CD4-positive, alpha-beta memory T cell (primary cell): ENCODE measurements at regions of chr4 and their contacts with region 1.

Region 1: GRCh38 chr4:26860157-26860921 is at the start of gene STIM2:
- DNase-seq: peak; percentile 96 to 100 (median 99)
- H3K4me3 ChIP-seq: peak within 1 kb of the TSS; percentile 88 to 94
- H3K4me3 Mint-ChIP-seq: peak within 1 kb of the TSS; percentile 94 to 100 (median 98)
- H3K27ac ChIP-seq: peak within 1 kb of the TSS; percentile 89
- H3K27ac Mint-ChIP-seq: peak within 1 kb of the TSS; percentile 98 to 100 (median 99)
- H3K4me1 ChIP-seq: peaks cover 61% of the 10 kb centered on the region
- H3K4me1 Mint-ChIP-seq: peaks cover 43 to 81% (median 54%) of the 10 kb centered on the region in 4 donors
- H3K27me3 ChIP-seq: no peaks in the 10 kb centered on the region
- H3K27me3 Mint-ChIP-seq: peaks cover 0 to 1% of the 10 kb centered on the region in 2 donors
- total RNA-seq, gene STIM2: 84.6 to 91.7 TPM

Region 2: DNA sequence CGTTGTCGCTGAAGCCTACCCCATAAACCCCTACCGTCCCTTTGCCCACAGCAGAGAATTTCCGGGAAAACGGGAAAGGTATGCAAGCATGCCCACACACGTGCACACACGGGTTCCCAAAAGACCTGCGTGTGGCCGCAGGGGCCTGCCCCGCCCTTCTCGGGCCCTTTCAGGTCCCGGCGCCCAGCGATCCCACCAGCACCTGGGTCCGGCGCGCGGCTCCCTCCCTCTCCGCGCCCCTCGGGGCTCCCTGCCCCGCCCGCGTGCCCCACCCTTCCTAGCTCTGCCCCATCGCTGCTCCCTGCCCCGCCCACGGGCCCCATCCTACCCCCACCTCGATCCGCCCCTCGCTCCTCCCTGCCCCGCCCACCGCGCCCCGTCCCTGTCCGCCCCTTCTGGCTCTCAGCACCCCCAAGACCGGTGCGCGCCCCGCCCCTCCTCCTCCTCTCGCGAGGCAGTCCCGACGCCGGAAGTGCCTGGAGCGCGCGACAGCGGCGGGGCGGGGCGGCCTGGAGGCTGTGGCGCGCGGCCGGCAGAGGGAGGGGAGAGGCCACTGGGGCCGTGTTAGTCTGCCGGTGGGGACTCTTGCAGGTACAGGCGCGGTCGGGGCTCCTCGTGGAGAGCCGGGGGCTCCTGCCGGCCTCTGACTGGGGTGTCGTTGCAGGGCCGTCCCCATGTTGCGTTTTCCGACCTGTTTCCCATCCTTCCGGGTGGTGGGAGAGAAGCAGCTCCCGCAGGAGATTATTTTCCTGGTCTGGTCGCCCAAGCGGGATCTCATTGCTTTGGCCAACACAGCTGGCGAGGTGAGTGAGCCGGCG is 1483.4 kb before region 1 on chr4 and contains the start of gene ANAPC4:
- CTCF ChIA-PET with region 1: no interaction called
- POLR2A ChIA-PET with region 1: no interaction called
- intact Hi-C with region 1: loop called (anchors 2 kb)
- DNase-seq: peak; percentile 92 to 97 (median 93)
- H3K4me3 ChIP-seq: peak within 1 kb of the TSS; percentile 57 to 95
- H3K4me3 Mint-ChIP-seq: peak within 1 kb of the TSS in 1 of 8 donors; percentile 80
- H3K27ac ChIP-seq: peak within 1 kb of the TSS; percentile 73
- H3K27ac Mint-ChIP-seq: peak within 1 kb of the TSS; percentile 65 to 92 (median 89)
- H3K4me1 ChIP-seq: peaks cover 24% of the 10 kb centered on the region
- H3K4me1 Mint-ChIP-seq: peaks cover 3 to 13% (median 10%) of the 10 kb centered on the region in 4 donors
- H3K27me3 ChIP-seq: no peaks in the 10 kb centered on the region
- H3K27me3 Mint-ChIP-seq: no peaks in the 10 kb centered on the region
- total RNA-seq, gene ANAPC4: 61.8 to 63.7 TPM

Region 3: DNA sequence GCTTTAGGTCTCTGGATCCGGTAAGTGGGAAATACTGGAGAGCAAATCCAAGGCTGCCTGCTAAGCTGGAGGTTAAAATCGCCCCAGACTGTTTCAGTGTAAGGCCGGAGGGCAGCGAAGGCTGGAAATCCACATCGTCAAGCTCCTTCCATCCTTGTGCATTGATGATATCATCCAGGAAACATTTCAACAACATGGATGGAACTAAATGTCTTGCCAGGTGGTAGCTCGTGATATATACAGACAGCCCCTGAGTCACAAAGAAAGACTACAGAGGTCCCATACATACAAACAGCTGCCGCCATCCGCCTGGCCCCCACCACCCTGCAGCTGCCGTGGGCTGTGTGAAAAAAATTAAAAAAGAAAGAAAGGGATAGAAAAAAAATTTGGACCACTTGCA is 688.4 kb before region 1 on chr4:
- CTCF ChIA-PET with region 1: no interaction called
- POLR2A ChIA-PET with region 1: no interaction called
- intact Hi-C with region 1: no loop called
- DNase-seq: no peak
- H3K4me3 ChIP-seq: no peak overlapping the region
- H3K4me3 Mint-ChIP-seq: peak overlapping the region in 1 of 8 donors; percentile 37
- H3K27ac ChIP-seq: no peak overlapping the region
- H3K27ac Mint-ChIP-seq: peak overlapping the region in 1 of 7 donors; percentile 32
- H3K4me1 ChIP-seq: peaks cover 9% of the 10 kb centered on the region
- H3K4me1 Mint-ChIP-seq: peaks cover 0 to 13% (median 7%) of the 10 kb centered on the region in 4 donors
- H3K27me3 ChIP-seq: no peaks in the 10 kb centered on the region
- H3K27me3 Mint-ChIP-seq: no peaks in the 10 kb centered on the region

Region 4: GRCh38 chr4:26319467-26319948 is 540.8 kb before region 1 on chr4:
- CTCF ChIA-PET with region 1: no interaction called
- POLR2A ChIA-PET with region 1: interaction called, 3 read pairs
- intact Hi-C with region 1: loop called (anchors 1 kb)
- DNase-seq: peak; percentile 96 to 98 (median 96)
- H3K4me3 ChIP-seq: peak overlapping the region; percentile 86
- H3K4me3 Mint-ChIP-seq: peak overlapping the region; percentile 96 to 100 (median 97)
- H3K27ac ChIP-seq: peak overlapping the region; percentile 97
- H3K27ac Mint-ChIP-seq: peak overlapping the region; percentile 98 to 99 (median 99)
- H3K4me1 ChIP-seq: peaks cover 32% of the 10 kb centered on the region
- H3K4me1 Mint-ChIP-seq: peaks cover 21 to 55% (median 32%) of the 10 kb centered on the region in 4 donors
- H3K27me3 ChIP-seq: no peaks in the 10 kb centered on the region
- H3K27me3 Mint-ChIP-seq: peaks cover 0 to 2% of the 10 kb centered on the region in 2 donors

Region 5: DNA sequence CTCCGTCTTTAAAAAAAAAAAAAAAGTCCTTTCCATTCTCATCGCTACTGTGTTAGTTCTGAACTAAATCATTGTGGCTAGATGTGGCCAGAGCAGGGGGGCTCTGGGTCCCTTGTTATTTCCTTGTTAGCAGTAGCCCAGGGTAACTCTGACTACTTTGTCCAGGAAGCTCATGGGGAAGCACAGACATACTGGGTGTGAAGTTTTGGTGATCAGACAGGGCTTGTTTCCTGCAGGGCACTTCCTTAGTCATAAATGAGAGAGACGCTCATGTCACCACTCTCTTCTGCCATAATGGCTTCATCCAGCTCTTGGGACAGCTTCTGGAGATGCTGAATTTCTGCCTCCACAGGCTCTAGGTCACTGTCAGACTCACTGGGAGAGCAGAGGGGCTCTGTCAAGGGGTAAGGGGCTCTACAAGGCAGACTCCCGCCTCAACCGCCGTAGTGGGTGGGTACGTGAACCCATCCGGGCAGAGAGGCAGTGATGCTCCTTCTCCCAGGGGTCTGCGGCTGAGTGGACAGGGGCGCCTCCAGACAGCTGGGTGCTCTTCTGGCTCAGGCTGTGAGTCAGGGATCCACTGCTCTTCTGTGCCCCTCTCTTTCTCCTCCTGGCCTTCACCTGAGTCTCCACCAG is 13.2 kb after region 1 on chr4:
- CTCF ChIA-PET with region 1: interaction called, 5 read pairs
- POLR2A ChIA-PET with region 1: interaction called, 41 read pairs
- intact Hi-C with region 1: loop called (anchors 1 kb)
- DNase-seq: peak; percentile 68 to 95 (median 80)
- H3K4me3 ChIP-seq: no peak overlapping the region
- H3K4me3 Mint-ChIP-seq: peak overlapping the region; percentile 50 to 89 (median 76)
- H3K27ac ChIP-seq: peak overlapping the region; percentile 55
- H3K27ac Mint-ChIP-seq: peak overlapping the region; percentile 84 to 96 (median 94)
- H3K4me1 ChIP-seq: peaks cover 85% of the 10 kb centered on the region
- H3K4me1 Mint-ChIP-seq: peaks cover 62 to 82% (median 74%) of the 10 kb centered on the region in 4 donors
- H3K27me3 ChIP-seq: no peaks in the 10 kb centered on the region
- H3K27me3 Mint-ChIP-seq: no peaks in the 10 kb centered on the region

Region 6: DNA sequence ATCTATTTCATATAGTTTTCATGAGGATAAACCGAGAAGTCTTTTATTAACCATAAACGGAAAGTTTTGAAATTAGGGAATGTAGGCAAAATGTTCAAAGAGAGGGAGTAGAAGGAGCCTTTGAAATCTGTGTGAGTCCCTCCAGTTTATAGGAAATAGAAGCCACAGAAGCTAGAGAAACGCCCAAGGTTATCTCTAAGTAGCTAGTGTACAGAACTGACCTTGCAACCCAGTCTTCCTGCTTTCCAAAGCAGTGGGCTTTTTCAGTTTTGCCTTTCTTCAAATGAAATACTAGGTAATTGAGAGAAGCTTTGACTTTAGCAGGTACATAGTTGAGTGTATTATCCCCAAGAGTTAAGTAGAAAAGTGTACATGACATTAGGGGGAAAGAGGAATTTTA is 39.7 kb after region 1 on chr4:
- CTCF ChIA-PET with region 1: no interaction called
- POLR2A ChIA-PET with region 1: interaction called, 23 read pairs
- intact Hi-C with region 1: no loop called
- DNase-seq: no peak
- H3K4me3 ChIP-seq: no peak overlapping the region
- H3K4me3 Mint-ChIP-seq: peak overlapping the region in 6 of 8 donors; percentile 25 to 72 (median 64)
- H3K27ac ChIP-seq: no peak overlapping the region
- H3K27ac Mint-ChIP-seq: peak overlapping the region in 3 of 7 donors; percentile 39 to 77 (median 67)
- H3K4me1 ChIP-seq: peaks cover 73% of the 10 kb centered on the region
- H3K4me1 Mint-ChIP-seq: peaks cover 61 to 78% (median 68%) of the 10 kb centered on the region in 4 donors
- H3K27me3 ChIP-seq: no peaks in the 10 kb centered on the region
- H3K27me3 Mint-ChIP-seq: no peaks in the 10 kb centered on the region

Region 7: DNA sequence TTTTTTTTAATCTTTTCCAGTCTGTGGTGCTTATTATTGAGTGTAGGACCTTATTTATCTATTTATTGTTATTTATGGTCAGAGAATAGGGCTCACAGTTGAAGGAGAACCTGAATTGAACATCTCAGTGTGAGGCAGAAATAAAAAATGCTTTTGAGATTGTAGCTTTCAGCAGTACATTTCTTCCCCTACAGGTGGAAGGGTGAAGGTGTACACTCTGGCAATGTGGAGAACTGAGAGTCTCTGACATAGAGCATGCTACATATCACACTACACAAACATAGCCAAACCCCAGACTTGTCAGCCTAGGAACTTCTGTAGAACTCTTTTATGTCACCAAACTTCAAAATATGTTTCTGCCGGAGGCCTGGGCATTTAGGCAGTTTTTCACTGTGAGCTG is 140.5 kb after region 1 on chr4:
- CTCF ChIA-PET with region 1: interaction called, 9 read pairs
- POLR2A ChIA-PET with region 1: interaction called, 24 read pairs
- intact Hi-C with region 1: loop called (anchors 2 kb)
- DNase-seq: peak in 4 of 5 donors; percentile 20 to 28 (median 23)
- H3K4me3 ChIP-seq: no peak overlapping the region
- H3K4me3 Mint-ChIP-seq: no peak overlapping the region
- H3K27ac ChIP-seq: no peak overlapping the region
- H3K27ac Mint-ChIP-seq: peak overlapping the region in 5 of 7 donors; percentile 13 to 73 (median 64)
- H3K4me1 ChIP-seq: peaks cover 26% of the 10 kb centered on the region
- H3K4me1 Mint-ChIP-seq: peaks cover 33 to 43% (median 39%) of the 10 kb centered on the region in 4 donors
- H3K27me3 ChIP-seq: no peaks in the 10 kb centered on the region
- H3K27me3 Mint-ChIP-seq: no peaks in the 10 kb centered on the region

Region 8: DNA sequence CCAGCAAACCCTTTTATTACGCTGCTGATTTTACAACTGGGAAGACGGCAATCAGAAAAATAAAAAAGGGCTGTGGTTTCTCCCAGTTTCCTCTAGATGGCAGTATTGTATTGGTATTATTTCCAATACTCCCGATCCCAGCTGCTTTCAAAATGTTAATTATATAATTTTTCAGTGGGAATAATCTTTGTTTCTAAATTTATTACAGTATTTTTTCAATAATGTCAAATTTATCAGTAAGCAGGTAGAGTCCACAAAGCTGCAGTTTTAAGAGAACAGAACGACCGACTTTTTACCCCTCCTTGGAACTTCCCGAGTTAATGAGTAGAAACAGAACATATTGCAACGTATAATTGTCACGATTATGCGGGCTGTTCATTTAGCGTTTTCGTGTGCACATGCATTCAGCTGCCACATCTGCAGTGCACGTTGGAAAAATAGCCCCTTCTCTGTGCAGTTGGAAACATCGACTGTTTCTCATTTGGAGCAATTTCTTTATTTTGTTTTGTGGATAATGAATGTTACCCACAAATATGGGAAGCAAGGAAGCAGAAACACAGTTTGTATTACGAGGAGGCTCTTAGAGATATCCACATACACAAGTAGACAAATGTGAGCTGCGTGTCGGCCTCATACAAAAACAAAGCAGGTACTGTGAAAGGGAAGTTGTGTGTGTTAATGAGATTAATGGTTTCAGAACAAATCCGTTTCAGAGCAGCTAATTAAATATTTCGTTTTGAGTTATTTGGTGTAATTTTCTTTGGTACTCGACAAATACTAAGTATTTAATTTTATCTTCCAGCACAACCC is 188.3 kb after region 1 on chr4:
- CTCF ChIA-PET with region 1: no interaction called
- POLR2A ChIA-PET with region 1: no interaction called
- intact Hi-C with region 1: no loop called
- DNase-seq: peak in 4 of 5 donors; percentile 31 to 46 (median 38)
- H3K4me3 ChIP-seq: no peak overlapping the region
- H3K4me3 Mint-ChIP-seq: peak overlapping the region in 5 of 8 donors; percentile 55 to 67 (median 61)
- H3K27ac ChIP-seq: no peak overlapping the region
- H3K27ac Mint-ChIP-seq: no peak overlapping the region
- H3K4me1 ChIP-seq: peaks cover 6% of the 10 kb centered on the region
- H3K4me1 Mint-ChIP-seq: peaks cover 4 to 11% (median 7%) of the 10 kb centered on the region in 4 donors
- H3K27me3 ChIP-seq: peaks cover 13% of the 10 kb centered on the region
- H3K27me3 Mint-ChIP-seq: peaks cover 26 to 33% of the 10 kb centered on the region in 2 donors